Activated CD4-positive, alpha-beta T cell treated with anti-CD3 and anti-CD28 coated beads for 36 hours (primary cell): ENCODE measurements at regions of chr2 and their contacts with region 1.

Region 1: GRCh38 chr2:219177552-219178376 is at the start of gene RETREG2:
- DNase-seq: peak; percentile 90
- ATAC-seq: peak; percentile 60
- H3K4me3 Mint-ChIP-seq: peak within 1 kb of the TSS; percentile 86
- H3K27ac Mint-ChIP-seq: peak within 1 kb of the TSS; percentile 97
- H3K4me1 Mint-ChIP-seq: peaks cover 52% of the 10 kb centered on the region
- H3K27me3 Mint-ChIP-seq: no peaks in the 10 kb centered on the region
- total RNA-seq, gene RETREG2: 58.8 to 70.1 TPM

Region 2: GRCh38 chr2:218568190-218569037 is 609.4 kb before region 1 on chr2 and contains the starts of genes CNOT9 and USP37:
- CTCF ChIA-PET with region 1: no interaction called
- POLR2A ChIA-PET with region 1: no interaction called
- intact Hi-C with region 1: loop called in 1 of 2 experiments (anchors 1 kb)
- DNase-seq: peak; percentile 100
- ATAC-seq: peak; percentile 92
- H3K4me3 Mint-ChIP-seq: peak within 1 kb of the TSS; percentile 96
- H3K27ac Mint-ChIP-seq: peak within 1 kb of the TSS; percentile 100
- H3K4me1 Mint-ChIP-seq: peaks cover 58% of the 10 kb centered on the region
- H3K27me3 Mint-ChIP-seq: no peaks in the 10 kb centered on the region
- total RNA-seq, gene CNOT9: 100 to 105 TPM
- total RNA-seq, gene USP37: 42.5 to 46.8 TPM

Region 3: DNA sequence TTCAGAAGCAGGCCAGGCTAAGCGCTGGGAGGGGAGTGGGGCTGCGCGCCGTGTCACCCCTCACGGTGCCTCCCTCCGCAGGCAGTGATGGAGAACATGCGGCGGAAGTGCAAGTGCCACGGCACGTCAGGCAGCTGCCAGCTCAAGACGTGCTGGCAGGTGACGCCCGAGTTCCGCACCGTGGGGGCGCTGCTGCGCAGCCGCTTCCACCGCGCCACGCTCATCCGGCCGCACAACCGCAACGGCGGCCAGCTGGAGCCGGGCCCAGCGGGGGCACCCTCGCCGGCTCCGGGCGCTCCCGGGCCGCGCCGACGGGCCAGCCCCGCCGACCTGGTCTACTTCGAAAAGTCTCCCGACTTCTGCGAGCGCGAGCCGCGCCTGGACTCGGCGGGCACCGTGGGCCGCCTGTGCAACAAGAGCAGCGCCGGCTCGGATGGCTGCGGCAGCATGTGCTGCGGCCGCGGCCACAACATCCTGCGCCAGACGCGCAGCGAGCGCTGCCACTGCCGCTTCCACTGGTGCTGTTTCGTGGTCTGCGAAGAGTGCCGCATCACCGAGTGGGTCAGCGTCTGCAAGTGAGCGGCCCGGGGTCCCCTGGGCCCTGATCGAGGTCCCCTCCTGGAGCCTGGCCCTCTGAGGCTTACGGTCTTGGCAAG is 284.9 kb before region 1 on chr2:
- CTCF ChIA-PET with region 1: no interaction called
- POLR2A ChIA-PET with region 1: no interaction called
- intact Hi-C with region 1: loop called in 1 of 2 experiments (anchors 1 kb)
- DNase-seq: peak; percentile 93
- ATAC-seq: peak; percentile 64
- H3K4me3 Mint-ChIP-seq: peak overlapping the region; percentile 71
- H3K27ac Mint-ChIP-seq: peak overlapping the region; percentile 91
- H3K4me1 Mint-ChIP-seq: peaks cover 49% of the 10 kb centered on the region
- H3K27me3 Mint-ChIP-seq: no peaks in the 10 kb centered on the region

Region 4: DNA sequence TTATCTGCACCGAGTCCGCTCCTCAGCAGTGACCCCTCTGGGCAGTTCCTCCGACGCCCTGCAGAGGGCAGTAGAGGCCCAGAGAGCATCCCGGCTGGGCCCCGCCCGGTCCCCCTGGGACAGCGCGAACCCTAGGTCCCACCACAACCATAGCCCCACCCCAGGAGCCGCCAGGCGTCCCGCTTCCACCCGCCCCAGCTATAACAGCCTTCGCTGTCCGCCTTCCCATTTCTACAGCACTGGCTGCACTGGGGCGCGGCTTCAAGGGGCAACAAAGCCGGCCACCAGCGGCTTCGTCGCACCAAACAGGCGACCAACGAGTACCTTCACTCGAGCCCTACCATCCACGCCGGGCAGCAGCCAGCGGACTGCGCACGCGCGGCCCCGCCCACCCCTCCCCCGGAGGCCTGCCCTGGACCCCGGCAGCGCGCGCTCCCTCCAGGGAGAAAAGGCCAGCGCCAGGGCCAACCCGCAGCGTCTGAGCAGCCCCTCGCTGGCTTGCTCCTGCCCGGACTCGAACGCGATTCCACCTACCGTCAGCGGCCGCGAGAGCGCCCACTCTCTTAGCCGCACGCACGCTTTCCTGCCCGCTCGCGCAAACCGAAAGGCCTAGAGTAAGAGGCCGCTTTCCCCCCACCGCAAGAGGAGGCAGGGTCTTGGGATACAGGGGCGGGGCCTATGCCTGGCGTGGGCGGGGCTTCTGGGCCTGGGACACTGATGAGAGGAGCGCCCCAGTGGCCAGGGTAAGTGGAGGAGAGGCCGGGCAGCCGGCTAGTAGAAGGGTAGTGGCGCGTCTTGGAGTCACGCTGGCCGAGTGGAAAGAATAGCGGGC is 17.4 kb before region 1 on chr2 and contains the start of gene NHEJ1:
- CTCF ChIA-PET with region 1: interaction called, 24 read pairs
- POLR2A ChIA-PET with region 1: no interaction called
- intact Hi-C with region 1: loop called (anchors 1 kb)
- DNase-seq: peak; percentile 97
- ATAC-seq: peak; percentile 89
- H3K4me3 Mint-ChIP-seq: peak within 1 kb of the TSS; percentile 81
- H3K27ac Mint-ChIP-seq: peak within 1 kb of the TSS; percentile 88
- H3K4me1 Mint-ChIP-seq: peaks cover 13% of the 10 kb centered on the region
- H3K27me3 Mint-ChIP-seq: no peaks in the 10 kb centered on the region
- total RNA-seq, gene NHEJ1: 20.7 to 23.8 TPM

Region 5: DNA sequence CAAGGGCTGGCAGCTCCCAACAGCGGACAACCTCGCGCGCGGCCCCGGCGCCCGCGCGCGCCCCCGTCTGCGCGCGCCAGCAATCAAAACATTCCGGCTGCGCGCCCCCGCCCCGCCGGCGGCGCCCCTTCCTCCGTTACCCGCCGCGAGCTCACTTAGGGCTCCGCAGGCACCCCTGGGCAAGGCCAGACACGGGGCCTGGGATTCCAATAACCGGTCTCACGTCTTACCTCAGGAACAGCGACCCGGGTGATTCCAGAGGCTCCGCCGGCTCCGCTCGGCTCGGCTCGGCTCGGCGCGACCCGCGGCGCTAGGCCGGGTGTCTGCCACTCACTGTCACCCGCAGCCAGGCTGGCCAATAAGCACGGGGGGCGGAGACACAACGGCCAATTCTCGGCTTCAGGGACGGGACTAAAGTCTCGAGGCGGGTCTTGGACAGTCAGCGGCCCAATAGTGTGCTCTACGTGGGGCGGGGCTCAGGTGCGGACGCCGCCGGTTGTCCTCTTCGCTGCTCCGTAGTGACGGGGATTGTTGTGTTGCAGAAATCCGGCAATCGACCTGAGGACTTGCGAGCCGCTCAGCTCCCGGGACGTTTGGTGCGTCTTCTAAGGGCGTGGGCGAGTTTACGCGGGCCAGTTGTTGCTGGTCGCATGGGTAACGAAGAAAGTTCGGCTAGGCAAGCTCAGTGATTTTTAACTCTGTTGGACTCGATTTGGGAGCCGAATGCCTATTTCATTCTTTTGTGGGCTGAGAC is 51.7 kb after region 1 on chr2 and contains the starts of genes ANKZF1 and ATG9A:
- CTCF ChIA-PET with region 1: interaction called, 7 read pairs
- POLR2A ChIA-PET with region 1: interaction called, 4 read pairs
- intact Hi-C with region 1: loop called (anchors 1 kb)
- DNase-seq: peak; percentile 99
- ATAC-seq: peak; percentile 98
- H3K4me3 Mint-ChIP-seq: peak within 1 kb of the TSS; percentile 98
- H3K27ac Mint-ChIP-seq: peak within 1 kb of the TSS; percentile 98
- H3K4me1 Mint-ChIP-seq: peaks cover 34% of the 10 kb centered on the region
- H3K27me3 Mint-ChIP-seq: no peaks in the 10 kb centered on the region
- total RNA-seq, gene ANKZF1: 140 to 166 TPM
- total RNA-seq, gene ATG9A: 43.5 to 45.6 TPM

Region 6: DNA sequence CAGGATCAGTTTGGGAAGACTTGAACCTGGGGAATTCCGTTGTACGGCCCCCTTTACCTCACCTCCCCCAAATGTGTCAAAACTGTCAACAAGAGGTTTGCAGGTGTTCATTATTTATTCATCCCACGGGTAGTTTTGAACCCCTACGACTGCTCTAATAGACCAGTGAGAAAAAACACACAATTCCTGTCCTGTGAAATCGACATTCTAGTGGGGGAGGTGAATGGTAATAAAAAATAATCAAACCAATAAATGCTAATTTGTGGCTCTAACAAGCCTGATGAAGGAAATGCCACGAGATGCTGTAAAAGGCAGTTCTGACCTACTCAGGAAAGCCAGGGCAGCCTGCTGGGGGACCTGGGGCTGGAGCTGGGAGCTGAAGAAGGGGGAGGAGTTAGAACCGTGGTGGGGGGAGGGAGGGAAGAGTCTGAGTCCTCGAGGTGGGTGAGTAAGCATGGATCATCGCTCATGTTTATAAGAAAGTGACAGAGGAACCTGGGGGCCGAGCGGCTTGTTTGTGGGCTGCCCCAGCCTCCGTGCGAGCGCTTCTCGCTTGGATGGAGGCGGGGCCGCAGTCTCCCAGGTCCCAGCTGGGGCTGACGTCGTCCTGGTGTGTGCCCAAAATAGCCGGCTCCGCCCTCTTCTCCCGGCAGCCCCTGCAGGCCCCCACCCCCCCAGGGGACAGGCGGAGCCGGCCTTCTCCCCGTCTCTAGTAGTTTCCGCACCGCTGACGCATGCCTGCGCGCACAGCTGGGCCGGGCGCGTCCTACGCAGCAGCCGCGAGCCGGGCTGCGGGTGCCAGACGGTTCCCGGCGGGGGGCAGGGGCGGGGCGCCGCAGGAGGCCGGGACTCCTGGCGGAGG is 101.1 kb after region 1 on chr2 and contains the start of gene DNAJB2:
- CTCF ChIA-PET with region 1: interaction called, 5 read pairs
- POLR2A ChIA-PET with region 1: interaction called, 3 read pairs
- intact Hi-C with region 1: loop called (anchors 1 kb)
- DNase-seq: peak; percentile 100
- ATAC-seq: peak; percentile 86
- H3K4me3 Mint-ChIP-seq: peak within 1 kb of the TSS; percentile 96
- H3K27ac Mint-ChIP-seq: peak within 1 kb of the TSS; percentile 95
- H3K4me1 Mint-ChIP-seq: peaks cover 37% of the 10 kb centered on the region
- H3K27me3 Mint-ChIP-seq: no peaks in the 10 kb centered on the region
- total RNA-seq, gene DNAJB2: 51.8 to 62.8 TPM

Region 7: DNA sequence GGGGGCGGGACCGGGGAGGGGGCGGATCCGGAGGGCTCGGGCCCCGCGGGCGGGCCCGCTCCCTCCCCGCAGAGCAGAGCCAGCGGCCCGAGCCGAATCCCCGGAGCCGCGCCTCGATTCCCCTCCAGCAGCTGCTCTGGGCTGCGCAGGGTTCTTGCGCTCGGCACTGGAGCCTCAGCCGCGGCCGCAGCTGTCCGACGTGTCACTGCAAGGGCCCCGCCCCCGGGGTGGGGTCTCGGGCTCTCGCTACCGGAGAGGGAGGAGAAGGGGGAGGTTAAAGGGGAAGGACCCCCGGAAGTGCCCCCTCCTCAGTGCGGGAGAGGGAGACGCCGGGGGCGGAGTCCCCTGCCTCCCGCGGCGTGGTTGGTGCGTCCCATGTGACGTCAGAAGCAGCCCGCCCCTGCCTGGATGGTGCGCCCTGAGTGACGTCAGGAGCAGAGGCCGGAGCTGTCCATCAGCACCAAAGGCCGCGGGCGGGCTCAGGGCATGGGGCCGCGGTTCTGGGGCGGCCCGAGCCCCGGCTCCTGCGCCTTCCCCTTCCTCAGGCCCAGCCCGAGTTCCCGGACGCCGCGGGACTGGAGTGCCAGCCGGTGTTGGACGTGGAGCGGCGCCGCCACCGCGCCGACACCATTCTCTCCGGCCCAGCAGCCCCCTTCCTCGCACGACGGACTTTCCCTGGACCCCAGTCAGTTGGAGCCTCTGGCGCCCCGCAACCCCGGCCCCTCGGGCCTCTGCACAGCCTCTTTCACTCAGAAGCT is 366.0 kb after region 1 on chr2 and contains the starts of genes CHPF and TMEM198:
- CTCF ChIA-PET with region 1: no interaction called
- POLR2A ChIA-PET with region 1: no interaction called
- intact Hi-C with region 1: loop called in 1 of 2 experiments (anchors 2 kb)
- DNase-seq: peak; percentile 98
- ATAC-seq: peak; percentile 85
- H3K4me3 Mint-ChIP-seq: peak within 1 kb of the TSS; percentile 87
- H3K27ac Mint-ChIP-seq: peak within 1 kb of the TSS; percentile 66
- H3K4me1 Mint-ChIP-seq: peaks cover 22% of the 10 kb centered on the region
- H3K27me3 Mint-ChIP-seq: no peaks in the 10 kb centered on the region
- total RNA-seq, gene CHPF: 14.1 to 17.1 TPM
- total RNA-seq, gene TMEM198: 2.4 to 2.7 TPM